H1 (cell line): ENCODE measurements at regions of chr3 and their contacts with region 1.

Region 1: GRCh38 chr3:116770815-116771450 is 61.4 kb downstream of the TUSC7 start:
- DNase-seq: peak; percentile 60 to 84
- H3K4me3 ChIP-seq: no peak overlapping the region
- H3K27ac ChIP-seq: no peak overlapping the region
- H3K4me1 ChIP-seq: no peaks in the 10 kb centered on the region
- H3K27me3 ChIP-seq: no peaks in the 10 kb centered on the region
- CTCF ChIP-seq: peak; percentile 45 to 99 (median 99)
- EP300 ChIP-seq: no peak
- POLR2A ChIP-seq: no peak
- RAD21 ChIP-seq: peak; percentile 99

Region 2: DNA sequence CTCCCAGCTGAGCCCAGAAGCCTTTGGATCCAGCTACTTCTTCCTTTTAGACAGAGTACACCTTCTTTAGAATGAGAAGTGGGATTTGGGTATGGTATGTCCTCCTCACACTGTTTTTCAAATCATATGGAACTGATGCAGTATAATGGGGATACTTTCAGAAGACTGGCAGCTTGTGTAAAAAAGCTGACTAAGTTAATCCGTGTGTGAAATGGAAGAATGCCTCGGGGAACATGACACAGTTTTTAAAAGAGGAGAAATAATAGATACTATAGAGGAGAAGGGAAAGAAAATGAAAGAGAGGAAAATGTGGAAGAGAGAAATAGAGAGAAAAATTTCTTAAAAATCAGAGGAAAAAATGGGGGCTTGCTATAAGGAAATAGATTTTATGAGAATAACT is 13.6 kb before region 1 on chr3:
- CTCF ChIA-PET with region 1: interaction called, 16 read pairs
- POLR2A ChIA-PET with region 1: no interaction called
- DNase-seq: no peak
- H3K4me3 ChIP-seq: no peak overlapping the region
- H3K27ac ChIP-seq: no peak overlapping the region
- H3K4me1 ChIP-seq: peaks cover 0 to 2% (median 0%) of the 10 kb centered on the region in 4 experiments; a peak in 2 of 7 replicates
- H3K27me3 ChIP-seq: no peaks in the 10 kb centered on the region
- CTCF ChIP-seq: no peak
- EP300 ChIP-seq: no peak
- POLR2A ChIP-seq: no peak
- RAD21 ChIP-seq: no peak

Region 3: GRCh38 chr3:116785226-116785625 is 14.3 kb after region 1 on chr3:
- CTCF ChIA-PET with region 1: interaction called, 14 read pairs
- POLR2A ChIA-PET with region 1: no interaction called
- DNase-seq: no peak
- H3K4me3 ChIP-seq: no peak overlapping the region
- H3K27ac ChIP-seq: no peak overlapping the region
- H3K4me1 ChIP-seq: peaks cover 0 to 10% (median 6%) of the 10 kb centered on the region in 4 experiments; a peak in 5 of 7 replicates
- H3K27me3 ChIP-seq: no peaks in the 10 kb centered on the region
- CTCF ChIP-seq: no peak
- EP300 ChIP-seq: no peak
- POLR2A ChIP-seq: no peak
- RAD21 ChIP-seq: no peak; a peak in 1 of 4 replicates

Region 4: GRCh38 chr3:116815831-116816588 is 45.1 kb after region 1 on chr3:
- CTCF ChIA-PET with region 1: no interaction called
- POLR2A ChIA-PET with region 1: no interaction called
- DNase-seq: no peak
- H3K4me3 ChIP-seq: no peak overlapping the region
- H3K27ac ChIP-seq: no peak overlapping the region
- H3K4me1 ChIP-seq: peaks cover 0 to 12% (median 2%) of the 10 kb centered on the region in 4 experiments; a peak in 3 of 7 replicates
- H3K27me3 ChIP-seq: no peaks in the 10 kb centered on the region
- CTCF ChIP-seq: no peak
- EP300 ChIP-seq: no peak
- POLR2A ChIP-seq: no peak
- RAD21 ChIP-seq: no peak

Region 5: GRCh38 chr3:116863822-116864589 is 93.1 kb after region 1 on chr3:
- CTCF ChIA-PET with region 1: interaction called, 25 read pairs
- POLR2A ChIA-PET with region 1: no interaction called
- DNase-seq: peak; percentile 34 to 60
- H3K4me3 ChIP-seq: peak overlapping the region; percentile 20 to 56 (median 39); a peak in 7 of 8 replicates
- H3K27ac ChIP-seq: no peak overlapping the region; the same call in 1 of the 2 replicates
- H3K4me1 ChIP-seq: peaks cover 7 to 13% (median 9%) of the 10 kb centered on the region in 4 experiments; a peak in 5 of 7 replicates
- H3K27me3 ChIP-seq: no peaks in the 10 kb centered on the region
- CTCF ChIP-seq: peak in 2 of 3 experiments; percentile 60; a peak in 3 of 4 replicates
- EP300 ChIP-seq: no peak
- POLR2A ChIP-seq: 0 out of 3 replicates have a peak, but pooled peaks of 1 of the 2 experiments have one; percentile 42
- RAD21 ChIP-seq: peak; percentile 91 to 92

Region 6: DNA sequence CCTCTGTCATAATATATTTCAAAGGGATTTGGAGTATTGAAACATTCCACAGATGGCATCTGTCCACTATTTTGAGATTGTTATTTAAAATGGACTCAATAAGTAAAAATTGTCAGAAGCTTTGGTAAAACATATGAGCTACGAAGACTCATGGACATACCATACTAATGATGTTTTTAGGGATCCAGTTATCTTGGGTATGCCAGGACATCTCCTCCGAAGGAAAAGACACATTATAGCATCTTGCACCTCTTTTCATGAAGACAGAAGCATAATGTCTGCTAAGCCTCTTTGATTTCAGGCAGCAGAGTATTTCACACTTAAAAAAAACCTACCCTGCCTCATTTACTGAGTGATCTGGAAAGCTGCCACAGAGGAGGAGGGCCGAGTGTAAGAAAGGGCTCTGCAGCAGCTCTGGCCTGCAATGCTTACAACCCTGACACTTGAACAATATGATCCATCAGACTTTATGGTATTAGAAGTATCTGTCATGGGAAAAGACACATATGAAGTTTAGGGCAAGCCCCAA is 223.5 kb after region 1 on chr3:
- CTCF ChIA-PET with region 1: interaction called, 11 read pairs
- POLR2A ChIA-PET with region 1: no interaction called
- DNase-seq: no peak
- H3K4me3 ChIP-seq: no peak overlapping the region
- H3K27ac ChIP-seq: no peak overlapping the region
- H3K4me1 ChIP-seq: no peaks in the 10 kb centered on the region
- H3K27me3 ChIP-seq: no peaks in the 10 kb centered on the region
- CTCF ChIP-seq: no peak
- EP300 ChIP-seq: no peak
- POLR2A ChIP-seq: no peak
- RAD21 ChIP-seq: no peak

Region 7: GRCh38 chr3:117019082-117019713 is 248.3 kb after region 1 on chr3:
- CTCF ChIA-PET with region 1: interaction called, 17 read pairs
- POLR2A ChIA-PET with region 1: no interaction called
- DNase-seq: peak; percentile 50 to 67
- H3K4me3 ChIP-seq: no peak overlapping the region
- H3K27ac ChIP-seq: no peak overlapping the region
- H3K4me1 ChIP-seq: no peaks in the 10 kb centered on the region
- H3K27me3 ChIP-seq: no peaks in the 10 kb centered on the region
- CTCF ChIP-seq: peak; percentile 41 to 89 (median 83)
- EP300 ChIP-seq: no peak
- POLR2A ChIP-seq: no peak
- RAD21 ChIP-seq: peak; percentile 97 to 98

Region 8: GRCh38 chr3:117059067-117059955 is 288.4 kb after region 1 on chr3:
- CTCF ChIA-PET with region 1: interaction called, 12 read pairs
- POLR2A ChIA-PET with region 1: no interaction called
- DNase-seq: no peak
- H3K4me3 ChIP-seq: peak overlapping the region in 1 of 4 experiments; percentile 10; a peak in 1 of 8 replicates
- H3K27ac ChIP-seq: no peak overlapping the region
- H3K4me1 ChIP-seq: peaks cover 0 to 14% (median 2%) of the 10 kb centered on the region in 4 experiments; a peak in 4 of 7 replicates
- H3K27me3 ChIP-seq: no peaks in the 10 kb centered on the region
- CTCF ChIP-seq: peak in 2 of 3 experiments; percentile 32 to 36; a peak in 2 of 4 replicates
- EP300 ChIP-seq: no peak
- POLR2A ChIP-seq: no peak
- RAD21 ChIP-seq: peak; percentile 56 to 60